Activated naive CD4-positive, alpha-beta T cell treated with anti-CD3 and anti-CD28 coated beads, Interleukin-2, amount 10 ng/mL, durations not matched to agents 7 days and 5 days (primary cell): ENCODE measurements at regions of chr2 and their contacts with region 1.

Region 1: DNA sequence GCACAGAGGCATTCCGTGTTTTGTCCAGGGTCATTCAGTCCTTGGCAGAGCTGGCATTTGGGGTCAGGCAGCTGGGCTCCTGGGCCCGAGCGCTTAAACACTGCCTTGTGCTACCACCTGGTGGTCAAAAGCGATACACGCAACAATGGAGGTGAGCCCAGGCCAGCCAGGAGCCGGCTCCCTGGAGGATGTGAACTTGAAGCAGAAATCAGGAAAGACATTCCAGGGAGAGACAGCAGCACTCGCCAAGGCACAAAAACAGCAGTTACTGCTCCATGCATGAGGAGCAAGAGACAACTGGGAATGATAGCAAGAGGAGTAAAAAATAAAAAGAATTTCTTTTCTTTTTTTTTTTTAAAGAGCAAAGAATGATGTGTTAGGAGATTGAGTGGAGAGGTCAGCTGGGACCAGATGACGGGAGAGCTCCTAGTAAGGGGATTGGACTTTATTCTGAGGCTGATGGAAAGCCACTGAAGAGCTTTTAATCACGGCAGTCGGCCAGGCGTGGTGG is 20.7 kb downstream of the SCYGR8 start:
- DNase-seq: peak; percentile 69
- H3K4me3 Mint-ChIP-seq: no peak overlapping the region
- H3K27ac Mint-ChIP-seq: no peak overlapping the region
- H3K4me1 Mint-ChIP-seq: no peaks in the 10 kb centered on the region
- H3K27me3 Mint-ChIP-seq: no peaks in the 10 kb centered on the region

Region 2: GRCh38 chr2:227238238-227239237 is 527.9 kb before region 1 on chr2:
- CTCF ChIA-PET with region 1: interaction called, 11 read pairs
- DNase-seq: peak; percentile 71
- H3K4me3 Mint-ChIP-seq: no peak overlapping the region
- H3K27ac Mint-ChIP-seq: no peak overlapping the region
- H3K4me1 Mint-ChIP-seq: no peaks in the 10 kb centered on the region
- H3K27me3 Mint-ChIP-seq: peaks cover 15% of the 10 kb centered on the region

Region 3: GRCh38 chr2:227406177-227407031 is 360.0 kb before region 1 on chr2:
- CTCF ChIA-PET with region 1: interaction called, 12 read pairs
- DNase-seq: no peak
- H3K4me3 Mint-ChIP-seq: no peak overlapping the region
- H3K27ac Mint-ChIP-seq: no peak overlapping the region
- H3K4me1 Mint-ChIP-seq: peaks cover 18% of the 10 kb centered on the region
- H3K27me3 Mint-ChIP-seq: no peaks in the 10 kb centered on the region

Region 4: DNA sequence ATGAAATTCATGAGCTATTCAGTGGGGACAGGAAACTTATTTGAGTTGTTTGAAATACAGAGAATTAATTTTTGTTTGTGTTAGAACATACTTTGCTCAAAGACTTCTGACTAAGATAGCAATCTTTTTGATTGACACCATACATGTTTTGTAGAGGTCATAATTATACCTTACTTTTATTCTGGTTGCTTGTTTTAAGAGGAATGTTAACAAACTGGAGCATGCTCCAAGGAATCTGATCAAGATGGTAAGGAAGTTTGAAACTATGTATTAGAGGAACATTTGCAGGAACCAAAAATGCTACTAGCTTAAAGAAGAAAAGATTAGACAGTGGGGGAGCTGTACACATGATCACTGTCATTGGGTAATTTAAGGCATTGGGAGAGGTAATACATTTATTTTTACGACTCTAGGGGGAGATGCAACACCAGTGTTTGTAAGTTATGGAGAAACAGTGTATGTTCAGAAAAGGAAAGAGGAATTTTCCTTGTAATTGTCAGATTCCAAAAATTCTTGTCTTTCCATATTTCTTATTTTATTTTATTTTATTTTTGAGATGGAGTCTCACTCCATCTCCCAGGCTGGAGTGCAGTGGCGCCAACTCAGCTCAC is 286.5 kb before region 1 on chr2:
- CTCF ChIA-PET with region 1: interaction called, 13 read pairs
- DNase-seq: no peak
- H3K4me3 Mint-ChIP-seq: no peak overlapping the region
- H3K27ac Mint-ChIP-seq: no peak overlapping the region
- H3K4me1 Mint-ChIP-seq: peaks cover 47% of the 10 kb centered on the region
- H3K27me3 Mint-ChIP-seq: no peaks in the 10 kb centered on the region

Region 5: GRCh38 chr2:227657199-227657845 is 109.1 kb before region 1 on chr2:
- CTCF ChIA-PET with region 1: interaction called, 42 read pairs
- DNase-seq: no peak
- H3K4me3 Mint-ChIP-seq: no peak overlapping the region
- H3K27ac Mint-ChIP-seq: no peak overlapping the region
- H3K4me1 Mint-ChIP-seq: no peaks in the 10 kb centered on the region
- H3K27me3 Mint-ChIP-seq: no peaks in the 10 kb centered on the region

Region 6: GRCh38 chr2:227862227-227862740 is 95.9 kb after region 1 on chr2:
- CTCF ChIA-PET with region 1: interaction called, 11 read pairs
- DNase-seq: peak; percentile 31
- H3K4me3 Mint-ChIP-seq: no peak overlapping the region
- H3K27ac Mint-ChIP-seq: no peak overlapping the region
- H3K4me1 Mint-ChIP-seq: no peaks in the 10 kb centered on the region
- H3K27me3 Mint-ChIP-seq: peaks cover 5% of the 10 kb centered on the region